ENCODE measurements at regions of chr4 and their contacts with region 1.

Region 1: DNA sequence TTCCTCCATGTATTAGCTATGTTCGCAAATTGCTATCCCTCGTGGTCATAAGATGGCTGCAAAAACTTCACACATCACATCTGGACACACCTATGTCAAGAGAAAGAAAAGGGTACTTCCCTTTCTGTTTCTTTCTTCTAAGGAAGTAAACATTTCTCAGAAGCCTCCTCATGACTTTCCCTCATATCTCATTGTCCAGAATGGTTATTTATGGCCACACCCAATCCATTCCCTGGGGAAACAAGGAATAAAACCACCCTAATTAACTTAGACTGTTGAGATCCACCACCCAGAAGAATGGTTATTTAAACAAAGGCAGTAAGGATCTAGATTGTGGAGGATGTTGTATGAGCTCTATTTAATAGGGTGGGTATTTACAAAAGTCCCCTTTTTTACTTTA is 160.8 kb upstream of the LNX1 start:
- DNase-seq: no peak
- H3K4me3 ChIP-seq: no peak overlapping the region
- H3K27ac ChIP-seq: no peak overlapping the region
- H3K4me1 ChIP-seq: no peaks in the 10 kb centered on the region
- H3K27me3 ChIP-seq: no peaks in the 10 kb centered on the region
- CTCF ChIP-seq: no peak
- EP300 ChIP-seq: no peak
- POLR2A ChIP-seq: no peak

Region 2: DNA sequence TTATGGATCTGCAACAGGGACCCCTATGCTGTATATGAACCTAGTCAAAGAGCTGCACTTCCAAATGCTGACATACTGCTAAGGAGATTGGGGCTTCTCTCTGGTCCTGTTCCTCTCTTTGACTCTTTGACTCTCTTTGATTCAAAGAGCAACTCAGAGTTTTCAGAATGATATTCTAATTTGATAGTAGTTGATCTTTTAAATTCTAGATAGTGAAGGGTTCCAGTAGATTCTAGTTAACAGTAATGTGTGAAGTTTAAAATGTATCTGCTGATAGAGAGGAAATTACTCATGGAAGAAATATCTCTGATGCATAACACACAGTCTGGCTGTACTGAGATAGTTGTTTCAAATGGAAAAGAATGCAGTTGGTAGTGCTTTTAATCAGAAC is 650.9 kb before region 1 on chr4:
- in situ Hi-C with region 1: no loop called
- intact Hi-C with region 1: no loop called
- DNase-seq: no peak
- H3K4me3 ChIP-seq: no peak overlapping the region
- H3K27ac ChIP-seq: no peak overlapping the region
- H3K4me1 ChIP-seq: peaks cover 0 to 6% (median 0%) of the 10 kb centered on the region in 4 donors
- H3K27me3 ChIP-seq: no peaks in the 10 kb centered on the region
- CTCF ChIP-seq: no peak
- EP300 ChIP-seq: no peak
- POLR2A ChIP-seq: no peak

Region 3: DNA sequence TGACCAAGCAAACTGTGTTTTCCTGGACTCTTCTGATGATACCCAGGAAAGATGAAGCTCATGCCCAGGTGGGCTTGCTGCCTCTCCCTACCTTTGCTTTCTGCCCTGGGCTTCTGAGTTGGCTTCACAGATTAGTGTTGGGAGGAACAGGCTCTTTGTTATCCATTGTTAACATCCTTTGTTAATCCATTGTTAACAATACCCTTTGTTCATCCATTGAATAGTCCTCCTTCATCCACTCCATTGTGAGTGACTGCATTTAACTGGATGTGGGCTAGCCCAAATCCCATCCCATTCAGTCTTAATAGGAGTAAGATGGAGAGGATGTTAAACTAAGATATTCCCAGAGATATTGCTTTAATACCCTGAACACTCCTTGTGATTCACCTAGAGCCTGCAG is 38.2 kb after region 1 on chr4:
- in situ Hi-C with region 1: no loop called
- intact Hi-C with region 1: loop called (anchors 1 kb)
- DNase-seq: no peak
- H3K4me3 ChIP-seq: no peak overlapping the region
- H3K27ac ChIP-seq: no peak overlapping the region
- H3K4me1 ChIP-seq: peaks cover 0 to 11% (median 1%) of the 10 kb centered on the region in 4 donors
- H3K27me3 ChIP-seq: no peaks in the 10 kb centered on the region
- CTCF ChIP-seq: no peak
- EP300 ChIP-seq: no peak
- POLR2A ChIP-seq: no peak

Region 4: GRCh38 chr4:53914313-53915016 is 162.3 kb after region 1 on chr4:
- in situ Hi-C with region 1: no loop called
- intact Hi-C with region 1: no loop called
- DNase-seq: no peak
- H3K4me3 ChIP-seq: no peak overlapping the region
- H3K27ac ChIP-seq: no peak overlapping the region
- H3K4me1 ChIP-seq: no peaks in the 10 kb centered on the region
- H3K27me3 ChIP-seq: peaks cover 7% of the 10 kb centered on the region
- CTCF ChIP-seq: no peak
- EP300 ChIP-seq: no peak
- POLR2A ChIP-seq: no peak

Region 5: GRCh38 chr4:54118850-54119589 is 366.9 kb after region 1 on chr4:
- in situ Hi-C with region 1: no loop called
- intact Hi-C with region 1: no loop called
- DNase-seq: no peak
- H3K4me3 ChIP-seq: no peak overlapping the region
- H3K27ac ChIP-seq: no peak overlapping the region
- H3K4me1 ChIP-seq: peaks cover 0 to 14% (median 0%) of the 10 kb centered on the region in 4 donors
- H3K27me3 ChIP-seq: peaks cover 5% of the 10 kb centered on the region
- CTCF ChIP-seq: no peak
- EP300 ChIP-seq: no peak
- POLR2A ChIP-seq: no peak